Body of pancreas (tissue), 4 donors: ENCODE measurements at regions of chr12 and their contacts with region 1.

Region 1: GRCh38 chr12:8681041-8681902 is 16.5 kb upstream of the RIMKLB start:
- DNase-seq: peak in 2 of 4 donors; percentile 23 to 49
- ATAC-seq: peak; percentile 62
- H3K4me3 ChIP-seq: no peak overlapping the region
- H3K27ac ChIP-seq: no peak overlapping the region
- H3K4me1 ChIP-seq: peaks cover 7% of the 10 kb centered on the region
- H3K27me3 ChIP-seq: no peaks in the 10 kb centered on the region
- CTCF ChIP-seq: no peak
- POLR2A ChIP-seq: no peak

Region 2: DNA sequence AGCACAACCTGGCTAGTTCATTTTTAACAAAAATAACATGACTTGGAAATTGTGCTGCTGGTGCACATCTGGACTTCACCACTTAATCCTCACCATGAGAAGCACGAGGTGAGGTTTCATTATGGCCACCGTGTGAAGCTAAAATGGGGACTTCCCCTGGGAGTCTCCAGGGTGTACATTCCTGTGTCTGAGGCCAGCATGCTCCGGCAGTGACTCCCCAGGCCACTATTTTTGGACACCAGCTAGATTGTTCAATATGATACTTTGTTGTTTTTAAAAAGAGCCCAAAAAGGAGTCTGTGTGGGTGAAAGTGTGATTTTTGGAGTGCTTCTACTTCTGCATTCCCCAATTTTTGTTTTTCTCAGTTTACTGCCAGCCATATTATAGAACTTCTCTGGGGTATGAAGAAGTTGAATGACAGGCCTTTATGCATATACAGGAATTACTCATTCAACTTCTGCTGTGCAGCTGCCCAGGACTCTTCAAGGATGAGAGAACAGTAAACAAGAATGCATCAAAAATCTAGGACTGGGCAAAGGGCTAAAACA is 51.7 kb before region 1 on chr12:
- intact Hi-C with region 1: no loop called
- DNase-seq: no peak
- ATAC-seq: no peak
- H3K4me3 ChIP-seq: no peak overlapping the region
- H3K27ac ChIP-seq: no peak overlapping the region
- H3K4me1 ChIP-seq: no peaks in the 10 kb centered on the region
- H3K27me3 ChIP-seq: no peaks in the 10 kb centered on the region
- CTCF ChIP-seq: no peak
- POLR2A ChIP-seq: no peak

Region 3: DNA sequence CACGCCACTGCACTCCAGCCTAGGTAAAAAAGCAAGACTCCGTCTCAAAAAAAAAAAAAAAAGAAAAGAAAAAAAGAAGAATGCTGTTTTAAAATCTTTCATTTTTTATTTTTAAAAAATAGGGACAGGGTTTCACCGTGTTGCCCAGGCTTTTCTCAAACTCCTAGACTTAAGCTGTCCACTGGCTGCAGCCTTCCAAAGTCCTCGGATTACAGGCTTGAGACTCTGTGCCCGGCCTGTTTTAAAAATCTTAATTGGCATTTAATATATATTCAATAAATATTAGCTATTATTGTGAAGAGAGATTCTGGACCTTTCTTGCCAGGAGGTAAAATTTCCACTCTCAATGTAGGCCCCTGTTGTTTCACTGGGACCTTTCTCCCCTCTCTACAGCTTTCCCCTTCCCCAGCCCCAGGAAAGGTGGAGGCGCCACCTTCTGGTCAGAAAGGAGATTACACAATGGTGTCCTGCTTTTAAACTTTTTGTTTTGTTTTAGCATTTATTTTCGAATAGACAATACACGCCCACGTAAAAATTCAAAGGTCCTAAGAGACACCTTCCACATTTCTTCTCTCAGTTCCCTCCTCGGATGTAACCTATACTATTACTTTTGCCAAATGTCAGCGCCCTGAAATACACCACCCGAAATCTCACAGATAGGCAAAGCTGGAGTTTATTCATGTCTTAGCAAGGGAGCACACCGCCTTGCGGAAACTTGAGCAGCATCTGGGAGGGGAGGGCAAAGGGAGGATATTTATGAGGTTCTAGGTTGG is 209.2 kb after region 1 on chr12:
- intact Hi-C with region 1: loop called (anchors 5 kb)
- DNase-seq: peak; percentile 27 to 55 (median 42)
- ATAC-seq: peak; percentile 71
- H3K4me3 ChIP-seq: peak overlapping the region in 1 of 2 donors; percentile 14
- H3K27ac ChIP-seq: no peak overlapping the region
- H3K4me1 ChIP-seq: no peaks in the 10 kb centered on the region
- H3K27me3 ChIP-seq: no peaks in the 10 kb centered on the region
- CTCF ChIP-seq: peak; percentile 66 to 87 (median 80)
- POLR2A ChIP-seq: no peak

Region 4: GRCh38 chr12:9039397-9039977 is 358.2 kb after region 1 on chr12:
- intact Hi-C with region 1: loop called (anchors 5 kb)
- DNase-seq: peak in 2 of 4 donors; percentile 39 to 51
- ATAC-seq: peak; percentile 80
- H3K4me3 ChIP-seq: no peak overlapping the region
- H3K27ac ChIP-seq: no peak overlapping the region
- H3K4me1 ChIP-seq: peaks cover 13% of the 10 kb centered on the region
- H3K27me3 ChIP-seq: no peaks in the 10 kb centered on the region
- CTCF ChIP-seq: peak; percentile 9 to 81 (median 74)
- POLR2A ChIP-seq: no peak